CD4-positive, alpha-beta memory T cell (primary cell): ENCODE measurements at regions of chr2 and their contacts with region 1.

Region 1: DNA sequence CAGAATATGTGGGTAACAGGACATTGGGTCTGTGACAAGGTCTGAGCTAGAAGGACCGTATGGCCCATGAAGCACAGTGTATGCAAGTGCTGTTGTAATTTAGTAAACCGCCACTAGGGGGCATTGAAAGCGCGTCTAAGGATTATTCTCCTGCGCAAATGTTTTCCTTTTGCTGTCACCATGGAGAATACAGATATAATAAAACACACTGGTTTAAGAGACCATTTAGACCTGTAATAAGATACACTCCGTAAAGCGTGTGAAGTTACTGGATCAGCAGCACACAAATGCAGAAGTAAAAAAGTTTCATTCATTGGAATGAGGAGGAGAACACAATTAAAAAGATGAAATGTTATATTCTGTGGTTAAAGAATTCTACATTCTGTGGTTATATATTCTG is 272.4 kb downstream of the AGAP1 start:
- DNase-seq: peak in 4 of 5 donors; percentile 38 to 47 (median 46)
- H3K4me3 ChIP-seq: no peak overlapping the region
- H3K4me3 Mint-ChIP-seq: no peak overlapping the region
- H3K27ac ChIP-seq: no peak overlapping the region
- H3K27ac Mint-ChIP-seq: peak overlapping the region in 1 of 7 donors; percentile 85
- H3K4me1 ChIP-seq: no peaks in the 10 kb centered on the region
- H3K4me1 Mint-ChIP-seq: peaks cover 0 to 4% (median 2%) of the 10 kb centered on the region in 4 donors
- H3K27me3 ChIP-seq: no peaks in the 10 kb centered on the region
- H3K27me3 Mint-ChIP-seq: peaks cover 2 to 3% of the 10 kb centered on the region in 2 donors

Region 2: DNA sequence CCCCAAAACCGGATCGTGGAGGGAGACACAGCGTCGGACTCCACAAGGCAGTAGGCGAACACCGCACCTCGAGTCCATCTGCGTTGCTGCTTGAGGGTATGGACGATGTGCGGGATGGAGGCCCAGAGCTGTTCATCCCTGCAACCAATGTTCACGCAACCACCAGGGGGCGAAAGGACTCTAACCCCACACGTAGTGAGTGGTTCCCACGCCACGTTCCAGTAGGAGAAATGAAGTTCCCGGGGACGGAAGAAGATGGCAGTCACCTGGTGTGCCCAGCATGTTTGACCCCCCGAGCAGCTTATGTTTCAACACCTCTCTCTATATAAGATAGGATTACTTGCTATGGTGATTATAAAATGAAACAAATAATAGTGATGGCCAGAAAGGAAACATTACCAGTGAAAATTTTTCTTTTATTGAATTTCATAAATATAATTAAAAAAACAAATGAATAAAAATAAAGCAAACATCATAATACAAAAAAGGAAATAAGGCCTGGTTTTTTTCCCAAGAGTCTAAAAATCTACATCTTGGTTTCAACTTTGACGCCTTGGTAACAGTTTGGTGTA is 630.2 kb before region 1 on chr2:
- CTCF ChIA-PET with region 1: no interaction called
- POLR2A ChIA-PET with region 1: no interaction called
- intact Hi-C with region 1: no loop called
- DNase-seq: peak in 4 of 5 donors; percentile 7 to 28 (median 10)
- H3K4me3 ChIP-seq: no peak overlapping the region
- H3K4me3 Mint-ChIP-seq: no peak overlapping the region
- H3K27ac ChIP-seq: no peak overlapping the region
- H3K27ac Mint-ChIP-seq: no peak overlapping the region
- H3K4me1 ChIP-seq: peaks cover 3% of the 10 kb centered on the region
- H3K4me1 Mint-ChIP-seq: no peaks in the 10 kb centered on the region
- H3K27me3 ChIP-seq: peaks cover 11% of the 10 kb centered on the region
- H3K27me3 Mint-ChIP-seq: peaks cover 10 to 11% of the 10 kb centered on the region in 2 donors

Region 3: GRCh38 chr2:235746257-235747084 is 19.8 kb before region 1 on chr2:
- CTCF ChIA-PET with region 1: interaction called, 17 read pairs
- POLR2A ChIA-PET with region 1: no interaction called
- intact Hi-C with region 1: no loop called
- DNase-seq: peak; percentile 34 to 49 (median 48)
- H3K4me3 ChIP-seq: no peak overlapping the region
- H3K4me3 Mint-ChIP-seq: no peak overlapping the region
- H3K27ac ChIP-seq: no peak overlapping the region
- H3K27ac Mint-ChIP-seq: no peak overlapping the region
- H3K4me1 ChIP-seq: no peaks in the 10 kb centered on the region
- H3K4me1 Mint-ChIP-seq: no peaks in the 10 kb centered on the region
- H3K27me3 ChIP-seq: no peaks in the 10 kb centered on the region
- H3K27me3 Mint-ChIP-seq: peaks cover 8 to 15% of the 10 kb centered on the region in 2 donors

Region 4: DNA sequence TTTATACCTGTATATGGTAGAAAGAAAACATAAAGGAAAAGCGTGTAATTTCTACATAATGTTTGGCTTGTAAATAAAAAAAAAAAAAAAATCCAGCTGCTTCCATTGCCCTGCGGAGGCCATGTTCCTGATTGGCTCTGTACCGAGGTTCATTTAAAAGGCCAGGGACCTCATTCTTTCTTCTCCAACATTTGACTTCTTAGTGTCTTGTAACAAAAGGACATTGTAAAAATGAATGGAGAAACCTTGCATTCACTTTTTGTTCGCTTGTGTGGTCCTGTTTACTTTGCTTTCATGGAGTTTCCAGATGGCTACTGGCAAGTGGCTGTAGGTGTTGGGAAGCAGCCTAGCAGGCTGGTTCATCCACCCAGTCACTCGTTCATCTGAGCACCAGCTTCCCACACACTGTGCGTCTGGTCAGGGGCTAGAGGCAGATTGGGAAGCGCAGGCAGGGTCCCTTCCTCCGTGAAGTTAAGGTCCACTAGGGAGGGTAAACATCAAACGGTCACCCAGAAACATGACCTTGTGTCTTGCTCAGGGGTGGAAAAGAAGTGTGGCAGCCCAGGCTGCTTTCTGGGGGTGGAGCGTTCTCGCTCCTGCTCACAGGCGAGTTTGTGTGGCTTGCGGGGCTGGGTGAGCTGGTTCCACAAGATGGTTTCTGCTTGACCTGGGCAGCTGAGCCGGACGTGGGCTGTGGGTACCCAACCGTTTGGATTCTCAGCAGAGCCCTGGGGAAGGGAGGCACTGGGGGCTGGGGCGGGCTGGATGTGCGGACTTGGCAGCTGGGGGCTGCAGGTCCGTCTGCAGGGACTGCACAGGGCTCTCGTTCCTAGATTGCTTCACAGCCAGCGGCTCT is 11.7 kb before region 1 on chr2:
- CTCF ChIA-PET with region 1: interaction called, 17 read pairs
- POLR2A ChIA-PET with region 1: no interaction called
- intact Hi-C with region 1: no loop called
- DNase-seq: no peak
- H3K4me3 ChIP-seq: no peak overlapping the region
- H3K4me3 Mint-ChIP-seq: no peak overlapping the region
- H3K27ac ChIP-seq: no peak overlapping the region
- H3K27ac Mint-ChIP-seq: no peak overlapping the region
- H3K4me1 ChIP-seq: no peaks in the 10 kb centered on the region
- H3K4me1 Mint-ChIP-seq: peaks cover 0 to 1% (median 0%) of the 10 kb centered on the region in 4 donors
- H3K27me3 ChIP-seq: no peaks in the 10 kb centered on the region
- H3K27me3 Mint-ChIP-seq: peaks cover 6 to 12% of the 10 kb centered on the region in 2 donors

Region 5: GRCh38 chr2:235779444-235779896 is 13.2 kb after region 1 on chr2:
- CTCF ChIA-PET with region 1: interaction called, 10 read pairs
- POLR2A ChIA-PET with region 1: no interaction called
- intact Hi-C with region 1: no loop called
- DNase-seq: peak in 4 of 5 donors; percentile 22 to 36 (median 25)
- H3K4me3 ChIP-seq: no peak overlapping the region
- H3K4me3 Mint-ChIP-seq: no peak overlapping the region
- H3K27ac ChIP-seq: no peak overlapping the region
- H3K27ac Mint-ChIP-seq: no peak overlapping the region
- H3K4me1 ChIP-seq: no peaks in the 10 kb centered on the region
- H3K4me1 Mint-ChIP-seq: no peaks in the 10 kb centered on the region
- H3K27me3 ChIP-seq: no peaks in the 10 kb centered on the region
- H3K27me3 Mint-ChIP-seq: peaks cover 4 to 5% of the 10 kb centered on the region in 2 donors

Region 6: DNA sequence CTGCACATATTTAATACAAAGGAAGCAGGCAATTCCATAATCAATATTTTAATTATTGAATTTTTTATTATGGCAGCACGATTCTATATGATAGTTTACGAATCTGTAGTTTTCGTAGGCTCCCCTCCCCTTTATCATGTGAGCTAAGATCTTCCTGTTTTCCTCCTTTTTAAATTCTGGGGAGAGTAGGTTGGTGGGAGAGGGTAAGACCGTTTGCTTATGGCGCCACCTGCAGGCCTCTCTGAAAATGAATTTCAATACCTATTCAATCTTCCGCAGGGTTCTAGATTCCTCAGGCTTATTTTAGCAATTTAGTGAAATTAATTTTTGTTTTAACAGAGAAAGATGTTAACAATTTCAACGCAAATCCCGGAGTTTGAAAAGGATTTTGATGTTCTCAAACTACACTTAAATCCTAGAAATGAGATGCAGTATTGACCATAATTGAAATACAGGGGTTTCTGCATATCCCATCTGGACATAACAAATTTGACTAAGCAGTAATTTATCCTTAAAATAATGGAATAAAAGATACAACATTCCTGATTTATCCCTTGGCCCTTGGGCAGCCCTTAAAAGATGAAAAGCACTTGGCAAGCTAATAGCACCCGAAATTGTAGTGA is 414.7 kb after region 1 on chr2:
- CTCF ChIA-PET with region 1: interaction called, 14 read pairs
- POLR2A ChIA-PET with region 1: no interaction called
- intact Hi-C with region 1: loop called (anchors 1 kb)
- DNase-seq: no peak
- H3K4me3 ChIP-seq: no peak overlapping the region
- H3K4me3 Mint-ChIP-seq: peak overlapping the region in 1 of 8 donors; percentile 55
- H3K27ac ChIP-seq: no peak overlapping the region
- H3K27ac Mint-ChIP-seq: peak overlapping the region in 1 of 7 donors; percentile 15
- H3K4me1 ChIP-seq: peaks cover 14% of the 10 kb centered on the region
- H3K4me1 Mint-ChIP-seq: peaks cover 0 to 19% (median 7%) of the 10 kb centered on the region in 4 donors
- H3K27me3 ChIP-seq: peaks cover 33% of the 10 kb centered on the region
- H3K27me3 Mint-ChIP-seq: peaks cover 35 to 39% of the 10 kb centered on the region in 2 donors

Region 7: DNA sequence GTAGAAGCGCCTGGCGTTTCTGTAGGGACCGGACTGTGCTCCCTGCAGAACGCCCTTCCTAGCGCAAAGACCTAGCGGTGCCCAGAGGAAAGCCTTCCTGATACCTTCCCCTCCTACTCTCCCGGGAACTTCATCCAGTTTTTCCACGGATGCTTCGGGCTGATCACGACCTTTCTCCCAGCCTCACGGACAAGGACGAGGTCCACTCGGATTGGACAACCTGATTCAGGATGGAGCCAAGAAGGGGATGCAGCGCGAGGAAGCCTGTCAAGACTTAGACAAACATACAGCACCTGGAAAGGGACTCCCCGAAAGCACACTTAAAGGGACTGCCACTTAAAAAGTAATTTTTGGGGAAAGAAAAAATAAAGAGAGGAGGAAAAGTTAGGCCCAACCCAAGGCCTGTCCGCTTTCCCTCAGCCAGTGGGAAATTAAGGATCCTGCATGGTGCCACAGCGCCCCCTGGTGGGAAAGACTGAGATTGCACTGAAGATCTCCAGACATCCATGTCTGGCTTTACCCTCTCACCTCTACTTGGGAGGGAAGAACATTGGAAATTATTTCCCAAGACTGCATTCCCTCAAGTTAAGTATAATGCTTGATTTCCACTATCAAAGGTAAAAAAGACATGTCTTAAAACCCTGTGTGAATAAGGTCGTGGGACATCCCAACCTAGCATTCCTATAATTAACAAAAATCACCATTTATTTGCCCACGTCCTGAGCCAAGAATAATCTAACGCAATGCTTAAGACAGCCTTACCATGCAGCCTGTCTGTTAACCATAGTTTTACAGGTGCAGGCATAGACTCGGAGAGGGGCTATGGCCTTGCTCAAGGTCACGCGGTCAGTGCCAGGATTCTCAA is 1306.0 kb after region 1 on chr2:
- CTCF ChIA-PET with region 1: interaction called, 3 read pairs
- POLR2A ChIA-PET with region 1: no interaction called
- intact Hi-C with region 1: loop called (anchors 2 kb)
- DNase-seq: peak; percentile 46 to 60 (median 51)
- H3K4me3 ChIP-seq: no peak overlapping the region
- H3K4me3 Mint-ChIP-seq: no peak overlapping the region
- H3K27ac ChIP-seq: no peak overlapping the region
- H3K27ac Mint-ChIP-seq: no peak overlapping the region
- H3K4me1 ChIP-seq: no peaks in the 10 kb centered on the region
- H3K4me1 Mint-ChIP-seq: no peaks in the 10 kb centered on the region
- H3K27me3 ChIP-seq: no peaks in the 10 kb centered on the region
- H3K27me3 Mint-ChIP-seq: no peaks in the 10 kb centered on the region